ENCODE measurements at regions of chr2 and their contacts with region 1.

Region 1: GRCh38 chr2:241177526-241178334 is 10.7 kb upstream of the ANO7 start:
- DNase-seq: no peak
- ATAC-seq: no peak
- H3K4me3 ChIP-seq: no peak overlapping the region
- H3K27ac ChIP-seq: no peak overlapping the region
- H3K4me1 ChIP-seq: no peaks in the 10 kb centered on the region
- H3K27me3 ChIP-seq: no peaks in the 10 kb centered on the region
- CTCF ChIP-seq: no peak

Region 2: GRCh38 chr2:241150660-241151530 is 26.8 kb before region 1 on chr2:
- CTCF ChIA-PET with region 1: interaction called, 10 read pairs
- POLR2A ChIA-PET with region 1: interaction called, 3 read pairs
- in situ Hi-C with region 1: no loop called
- intact Hi-C with region 1: no loop called
- DNase-seq: no peak
- ATAC-seq: peak; percentile 1; the same call in 1 of the 2 replicates
- H3K4me3 ChIP-seq: peak overlapping the region; percentile 64 to 90
- H3K27ac ChIP-seq: peak overlapping the region; percentile 72
- H3K4me1 ChIP-seq: peaks cover 16% of the 10 kb centered on the region
- H3K27me3 ChIP-seq: no peaks in the 10 kb centered on the region
- CTCF ChIP-seq: no peak

Region 3: DNA sequence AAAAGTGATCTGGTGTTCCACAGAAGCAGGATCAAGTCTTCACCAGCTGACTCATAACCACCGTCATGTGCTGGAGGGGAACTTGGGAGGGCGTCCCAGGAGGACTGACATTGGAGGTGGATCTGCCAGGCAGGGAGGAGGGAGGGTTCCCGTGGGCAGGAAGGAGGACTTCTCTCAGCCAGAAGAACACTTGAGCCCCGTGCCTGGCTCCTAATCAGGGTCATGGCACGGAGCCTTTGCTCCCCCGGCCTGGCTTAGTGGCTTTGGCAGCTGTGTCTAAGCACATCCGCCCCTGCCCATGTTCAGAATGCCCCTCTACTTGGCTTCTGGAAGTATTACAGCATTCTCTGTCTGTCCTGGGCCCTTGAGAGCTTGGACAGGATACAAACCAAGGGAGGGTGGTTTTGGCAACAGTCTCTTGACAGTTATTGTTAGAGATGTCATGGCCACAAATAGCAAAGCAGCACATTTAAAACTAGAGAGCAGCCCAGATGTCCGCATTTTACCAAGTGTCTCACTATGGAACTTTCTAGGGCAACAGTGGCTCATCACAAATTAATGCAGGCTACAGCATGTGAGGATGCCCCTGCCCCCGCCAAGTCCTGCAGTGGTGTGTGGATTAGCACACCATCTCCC is 16.0 kb before region 1 on chr2:
- CTCF ChIA-PET with region 1: interaction called, 10 read pairs
- POLR2A ChIA-PET with region 1: no interaction called
- in situ Hi-C with region 1: no loop called
- intact Hi-C with region 1: no loop called
- DNase-seq: no peak
- ATAC-seq: no peak
- H3K4me3 ChIP-seq: no peak overlapping the region
- H3K27ac ChIP-seq: no peak overlapping the region
- H3K4me1 ChIP-seq: no peaks in the 10 kb centered on the region
- H3K27me3 ChIP-seq: no peaks in the 10 kb centered on the region
- CTCF ChIP-seq: no peak